CD8-positive, alpha-beta memory T cell (primary cell): ENCODE measurements at regions of chr12 and their contacts with region 1.

Region 1: GRCh38 chr12:1939801-1940607 is 21.6 kb upstream of the CACNA2D4 start:
- DNase-seq: peak; percentile 75 to 90 (median 85)
- H3K4me3 ChIP-seq: no peak overlapping the region
- H3K4me3 Mint-ChIP-seq: no peak overlapping the region
- H3K27ac ChIP-seq: no peak overlapping the region
- H3K27ac Mint-ChIP-seq: peak overlapping the region in 5 of 8 donors; percentile 24 to 70 (median 61)
- H3K4me1 ChIP-seq: peaks cover 6% of the 10 kb centered on the region
- H3K4me1 Mint-ChIP-seq: peaks cover 4 to 11% (median 5%) of the 10 kb centered on the region in 3 donors
- H3K27me3 ChIP-seq: no peaks in the 10 kb centered on the region
- H3K27me3 Mint-ChIP-seq: no peaks in the 10 kb centered on the region

Region 2: DNA sequence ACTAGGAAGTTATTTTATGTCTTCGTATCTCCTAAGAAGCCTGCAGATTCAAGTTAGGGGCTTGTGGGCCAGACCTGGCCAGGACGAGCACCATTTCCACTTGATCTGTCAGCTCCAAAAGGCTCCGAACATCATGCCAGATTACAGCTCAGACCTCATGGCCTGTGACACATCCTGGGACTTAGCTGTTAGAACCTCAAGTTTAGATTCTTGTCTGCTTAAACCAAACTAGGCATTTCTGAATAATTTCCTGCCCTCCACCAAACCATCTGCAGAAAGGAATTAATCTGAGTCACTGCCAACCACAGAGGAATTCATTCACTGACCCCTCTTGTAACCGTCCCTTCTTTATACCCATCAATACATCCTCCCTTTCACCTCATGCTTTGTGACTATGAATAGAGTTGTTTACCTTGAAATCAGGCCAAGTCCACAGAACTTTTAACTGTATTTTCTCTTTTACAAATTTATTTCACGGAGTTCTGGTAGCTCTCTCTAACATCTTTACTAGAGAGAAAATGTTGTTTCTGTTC is 465.9 kb before region 1 on chr12:
- CTCF ChIA-PET with region 1: no interaction called
- POLR2A ChIA-PET with region 1: no interaction called
- DNase-seq: no peak
- H3K4me3 ChIP-seq: no peak overlapping the region
- H3K4me3 Mint-ChIP-seq: no peak overlapping the region
- H3K27ac ChIP-seq: no peak overlapping the region
- H3K27ac Mint-ChIP-seq: no peak overlapping the region
- H3K4me1 ChIP-seq: peaks cover 20% of the 10 kb centered on the region
- H3K4me1 Mint-ChIP-seq: peaks cover 0 to 10% (median 6%) of the 10 kb centered on the region in 3 donors
- H3K27me3 ChIP-seq: no peaks in the 10 kb centered on the region
- H3K27me3 Mint-ChIP-seq: peaks cover 0 to 1% of the 10 kb centered on the region in 2 donors

Region 3: GRCh38 chr12:1650260-1650977 is 289.6 kb before region 1 on chr12:
- CTCF ChIA-PET with region 1: interaction called, 33 read pairs
- POLR2A ChIA-PET with region 1: no interaction called
- DNase-seq: no peak
- H3K4me3 ChIP-seq: no peak overlapping the region
- H3K4me3 Mint-ChIP-seq: no peak overlapping the region
- H3K27ac ChIP-seq: no peak overlapping the region
- H3K27ac Mint-ChIP-seq: no peak overlapping the region
- H3K4me1 ChIP-seq: no peaks in the 10 kb centered on the region
- H3K4me1 Mint-ChIP-seq: peaks cover 3 to 8% (median 4%) of the 10 kb centered on the region in 3 donors
- H3K27me3 ChIP-seq: no peaks in the 10 kb centered on the region
- H3K27me3 Mint-ChIP-seq: peaks cover 11 to 14% of the 10 kb centered on the region in 2 donors

Region 4: GRCh38 chr12:1690578-1691122 is 249.4 kb before region 1 on chr12 and contains the start of gene ADIPOR2:
- CTCF ChIA-PET with region 1: interaction called, 10 read pairs
- POLR2A ChIA-PET with region 1: no interaction called
- DNase-seq: peak; percentile 87 to 95 (median 94)
- H3K4me3 ChIP-seq: peak within 1 kb of the TSS; percentile 77
- H3K4me3 Mint-ChIP-seq: peak within 1 kb of the TSS; percentile 87 to 98 (median 90)
- H3K27ac ChIP-seq: peak within 1 kb of the TSS; percentile 84
- H3K27ac Mint-ChIP-seq: peak within 1 kb of the TSS; percentile 93 to 100 (median 99)
- H3K4me1 ChIP-seq: peaks cover 20% of the 10 kb centered on the region
- H3K4me1 Mint-ChIP-seq: peaks cover 40 to 48% (median 46%) of the 10 kb centered on the region in 3 donors
- H3K27me3 ChIP-seq: no peaks in the 10 kb centered on the region
- H3K27me3 Mint-ChIP-seq: peaks cover 7 to 8% of the 10 kb centered on the region in 2 donors
- total RNA-seq, gene ADIPOR2: 54.1 to 63.9 TPM

Region 5: DNA sequence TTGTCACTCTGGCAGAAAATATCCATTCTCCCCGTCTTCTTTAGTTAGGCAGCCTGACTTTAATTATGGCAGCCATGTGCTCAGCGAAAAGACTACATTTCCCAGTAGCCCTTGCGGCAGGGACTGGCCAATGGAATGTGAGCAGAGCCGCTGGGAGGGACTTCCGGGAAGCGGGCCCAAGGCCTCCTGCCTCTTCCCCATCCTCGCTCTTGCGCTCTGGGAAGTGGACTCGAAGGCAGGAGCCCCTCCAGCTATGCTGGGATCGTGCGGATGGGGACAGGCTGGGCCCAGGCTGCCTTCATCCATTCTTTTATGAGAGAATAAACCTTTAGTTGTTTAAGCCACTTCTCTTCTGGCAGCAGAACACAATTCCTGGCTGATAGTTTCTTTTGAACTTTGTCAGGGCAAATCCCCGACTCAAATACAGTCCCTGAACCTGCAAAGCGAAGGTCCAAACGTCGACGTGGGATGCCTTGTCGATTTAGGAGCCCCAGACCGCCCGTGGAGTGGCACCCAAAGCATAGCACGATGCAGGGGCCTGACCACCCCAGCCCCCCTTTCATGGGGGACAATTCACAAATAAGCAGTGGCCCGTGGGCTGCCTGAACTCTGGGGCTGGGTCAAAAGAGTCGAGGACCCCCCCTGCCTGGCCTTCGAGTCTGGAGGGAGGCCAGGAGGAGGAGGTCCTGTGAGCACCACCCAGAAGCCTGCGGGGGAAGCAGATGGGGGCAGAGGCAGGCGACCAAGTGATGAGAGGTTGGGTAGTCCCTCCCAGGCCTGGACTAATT is 135.3 kb before region 1 on chr12:
- CTCF ChIA-PET with region 1: interaction called, 161 read pairs
- POLR2A ChIA-PET with region 1: no interaction called
- DNase-seq: peak; percentile 72 to 92 (median 75)
- H3K4me3 ChIP-seq: no peak overlapping the region
- H3K4me3 Mint-ChIP-seq: peak overlapping the region in 5 of 7 donors; percentile 1 to 68 (median 52)
- H3K27ac ChIP-seq: no peak overlapping the region
- H3K27ac Mint-ChIP-seq: peak overlapping the region in 7 of 8 donors; percentile 54 to 88 (median 85)
- H3K4me1 ChIP-seq: peaks cover 6% of the 10 kb centered on the region
- H3K4me1 Mint-ChIP-seq: peaks cover 11 to 19% (median 13%) of the 10 kb centered on the region in 3 donors
- H3K27me3 ChIP-seq: no peaks in the 10 kb centered on the region
- H3K27me3 Mint-ChIP-seq: no peaks in the 10 kb centered on the region

Region 6: DNA sequence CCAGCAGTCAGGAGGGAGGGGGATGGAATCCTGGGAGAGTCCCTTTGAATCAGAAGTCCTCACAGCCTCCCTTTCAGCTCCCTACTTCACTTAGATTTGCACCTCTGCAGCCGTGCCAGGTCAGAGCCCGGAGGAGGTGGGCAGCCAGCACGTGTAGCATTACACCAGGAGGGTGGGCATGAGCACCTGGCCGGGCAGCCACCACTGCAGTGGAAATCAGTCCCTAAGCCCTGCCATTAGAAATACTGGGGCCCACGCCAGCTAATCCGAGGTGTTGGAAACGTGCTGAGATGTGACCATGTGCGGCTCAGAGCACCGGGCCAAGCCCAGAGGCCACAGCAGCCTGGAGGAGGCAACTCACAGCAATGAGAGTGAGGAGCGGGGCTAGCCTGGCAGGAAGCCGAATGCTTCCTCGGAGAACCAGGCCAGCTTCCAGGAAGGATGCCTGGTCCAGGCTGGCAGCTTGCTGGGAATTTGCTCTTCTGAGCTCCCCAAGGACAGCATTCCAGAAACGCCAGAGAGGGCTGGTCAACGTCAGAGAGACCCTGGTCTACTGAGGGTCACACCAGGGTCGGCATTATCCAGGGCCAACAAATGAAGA is 12.2 kb before region 1 on chr12:
- CTCF ChIA-PET with region 1: interaction called, 13 read pairs
- POLR2A ChIA-PET with region 1: no interaction called
- DNase-seq: no peak
- H3K4me3 ChIP-seq: no peak overlapping the region
- H3K4me3 Mint-ChIP-seq: no peak overlapping the region
- H3K27ac ChIP-seq: no peak overlapping the region
- H3K27ac Mint-ChIP-seq: no peak overlapping the region
- H3K4me1 ChIP-seq: no peaks in the 10 kb centered on the region
- H3K4me1 Mint-ChIP-seq: peaks cover 4 to 13% (median 9%) of the 10 kb centered on the region in 3 donors
- H3K27me3 ChIP-seq: no peaks in the 10 kb centered on the region
- H3K27me3 Mint-ChIP-seq: peaks cover 2 to 22% of the 10 kb centered on the region in 2 donors